Naive thymus-derived CD4-positive, alpha-beta T cell (primary cell): ENCODE measurements at regions of chr15 and their contacts with region 1.

Region 1: DNA sequence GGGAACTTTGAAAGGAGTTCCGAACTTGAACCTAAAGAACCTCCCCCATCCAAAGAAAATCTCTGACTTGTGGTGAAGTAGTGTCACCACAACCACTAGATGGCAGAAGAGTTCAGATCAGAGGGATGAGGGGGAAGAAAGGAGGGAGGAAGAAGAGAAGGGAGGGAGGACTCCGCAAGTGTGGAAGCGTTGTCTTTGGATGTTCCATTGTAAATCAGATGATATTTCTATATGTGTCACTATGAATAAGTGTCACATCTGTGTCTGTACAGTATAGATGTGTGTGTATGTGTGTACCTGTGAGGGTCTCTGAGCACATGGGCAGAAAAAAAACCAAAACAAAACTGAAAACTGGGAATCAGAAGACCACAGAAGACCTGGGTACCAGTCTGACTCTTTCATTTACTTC is 16.9 kb downstream of the SLC24A1 start:
- DNase-seq: peak in 8 of 9 donors; percentile 34 to 75 (median 68)
- ATAC-seq: peak; percentile 92
- H3K4me3 ChIP-seq: no peak overlapping the region
- H3K4me3 Mint-ChIP-seq: peak overlapping the region in 5 of 10 donors; percentile 0 to 60 (median 4)
- H3K27ac ChIP-seq: no peak overlapping the region
- H3K27ac Mint-ChIP-seq: peak overlapping the region in 3 of 9 donors; percentile 6 to 15 (median 11)
- H3K4me1 ChIP-seq: no peaks in the 10 kb centered on the region
- H3K4me1 Mint-ChIP-seq: peaks cover 7 to 19% (median 10%) of the 10 kb centered on the region in 7 donors
- H3K27me3 ChIP-seq: no peaks in the 10 kb centered on the region
- H3K27me3 Mint-ChIP-seq: no peaks in the 10 kb centered on the region

Region 2: GRCh38 chr15:65558336-65558735 is 80.3 kb before region 1 on chr15:
- CTCF ChIA-PET with region 1: interaction called, 10 read pairs
- POLR2A ChIA-PET with region 1: no interaction called
- intact Hi-C with region 1: no loop called
- DNase-seq: no peak
- ATAC-seq: no peak
- H3K4me3 ChIP-seq: no peak overlapping the region
- H3K4me3 Mint-ChIP-seq: no peak overlapping the region
- H3K27ac ChIP-seq: no peak overlapping the region
- H3K27ac Mint-ChIP-seq: no peak overlapping the region
- H3K4me1 ChIP-seq: no peaks in the 10 kb centered on the region
- H3K4me1 Mint-ChIP-seq: no peaks in the 10 kb centered on the region
- H3K27me3 ChIP-seq: no peaks in the 10 kb centered on the region
- H3K27me3 Mint-ChIP-seq: no peaks in the 10 kb centered on the region

Region 3: DNA sequence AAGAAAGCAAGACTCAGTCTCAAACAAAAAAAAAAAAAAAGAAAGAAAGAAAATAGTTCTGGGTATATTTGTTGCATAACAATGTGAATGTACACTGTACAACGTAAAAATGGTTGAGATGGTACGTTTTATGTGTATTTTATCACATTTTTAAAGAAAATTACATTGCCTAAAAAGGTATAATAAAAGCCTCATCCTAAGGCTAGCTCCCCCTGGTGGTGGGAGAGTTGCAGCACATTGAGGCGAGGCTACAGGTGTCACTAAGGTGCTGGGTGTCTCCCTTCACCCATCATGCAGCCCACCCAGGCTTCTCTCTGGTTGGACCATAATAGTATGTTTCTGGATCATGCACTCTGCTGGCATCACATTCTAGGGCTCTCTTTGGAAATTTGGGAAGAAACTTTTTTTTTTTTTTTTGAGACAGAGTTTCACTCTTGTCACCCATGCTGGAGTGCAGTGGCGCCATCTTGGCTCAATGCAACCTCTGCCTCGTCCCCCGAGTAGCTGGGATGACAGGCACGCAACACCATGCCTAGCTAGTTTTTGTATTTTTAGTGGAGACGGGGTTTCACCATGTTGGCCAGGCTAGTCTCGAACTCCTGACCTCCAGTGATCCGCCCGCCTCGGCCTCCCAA is 218.3 kb after region 1 on chr15:
- CTCF ChIA-PET with region 1: interaction called, 31 read pairs
- POLR2A ChIA-PET with region 1: no interaction called
- intact Hi-C with region 1: loop called (anchors 1 kb)
- DNase-seq: peak; percentile 54 to 83 (median 77)
- ATAC-seq: peak; percentile 94
- H3K4me3 ChIP-seq: no peak overlapping the region
- H3K4me3 Mint-ChIP-seq: no peak overlapping the region
- H3K27ac ChIP-seq: no peak overlapping the region
- H3K27ac Mint-ChIP-seq: peak overlapping the region in 2 of 9 donors; percentile 21 to 69
- H3K4me1 ChIP-seq: no peaks in the 10 kb centered on the region
- H3K4me1 Mint-ChIP-seq: peaks cover 0 to 17% (median 13%) of the 10 kb centered on the region in 7 donors
- H3K27me3 ChIP-seq: no peaks in the 10 kb centered on the region
- H3K27me3 Mint-ChIP-seq: peaks cover 0 to 15% (median 0%) of the 10 kb centered on the region in 5 donors

Region 4: GRCh38 chr15:65981837-65982626 is 343.3 kb after region 1 on chr15:
- CTCF ChIA-PET with region 1: no interaction called
- POLR2A ChIA-PET with region 1: no interaction called
- intact Hi-C with region 1: loop called in 1 of 2 experiments (anchors 1 kb)
- DNase-seq: peak; percentile 19 to 76 (median 65)
- ATAC-seq: peak; percentile 90
- H3K4me3 ChIP-seq: peak overlapping the region; percentile 53
- H3K4me3 Mint-ChIP-seq: peak overlapping the region; percentile 55 to 82 (median 71)
- H3K27ac ChIP-seq: no peak overlapping the region
- H3K27ac Mint-ChIP-seq: no peak overlapping the region
- H3K4me1 ChIP-seq: peaks cover 0 to 3% of the 10 kb centered on the region in 2 donors
- H3K4me1 Mint-ChIP-seq: peaks cover 5 to 14% (median 9%) of the 10 kb centered on the region in 7 donors
- H3K27me3 ChIP-seq: no peaks in the 10 kb centered on the region
- H3K27me3 Mint-ChIP-seq: peaks cover 16 to 53% (median 19%) of the 10 kb centered on the region in 5 donors

Region 5: DNA sequence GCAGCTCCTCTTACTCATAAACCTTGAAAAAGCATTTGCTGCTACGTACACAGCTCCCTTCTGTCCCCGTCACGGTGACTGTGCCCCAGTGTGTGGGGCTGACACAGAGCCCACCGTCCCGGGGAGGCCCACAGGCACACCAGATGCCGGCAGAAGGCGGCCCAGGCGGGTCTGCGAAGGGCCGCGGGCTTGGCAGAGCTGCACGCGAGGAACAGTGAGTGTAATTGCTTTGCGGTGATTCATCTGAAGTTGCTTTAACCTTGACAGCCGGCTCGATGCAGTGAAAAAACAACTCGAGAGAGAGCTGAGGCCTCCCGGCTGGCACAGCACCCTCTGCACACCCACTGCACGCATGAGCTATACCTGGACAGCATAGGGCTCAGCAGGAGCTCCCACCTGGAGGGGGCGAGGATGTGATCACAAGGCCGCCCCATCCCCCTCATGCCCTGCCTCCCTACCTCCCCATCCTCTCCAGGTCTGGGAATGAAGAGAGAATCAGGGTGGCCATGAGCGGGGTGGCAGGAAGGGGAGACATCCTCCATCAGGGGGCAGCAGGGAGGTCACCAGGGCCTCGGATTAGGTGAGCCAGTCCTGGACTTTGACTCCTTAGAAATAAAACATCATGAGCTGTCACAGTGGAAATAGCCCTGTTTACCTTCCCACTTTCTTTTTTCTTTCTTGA is 442.2 kb after region 1 on chr15:
- CTCF ChIA-PET with region 1: no interaction called
- POLR2A ChIA-PET with region 1: no interaction called
- intact Hi-C with region 1: loop called in 1 of 2 experiments (anchors 10 kb)
- DNase-seq: no peak
- ATAC-seq: no peak
- H3K4me3 ChIP-seq: no peak overlapping the region
- H3K4me3 Mint-ChIP-seq: no peak overlapping the region
- H3K27ac ChIP-seq: no peak overlapping the region
- H3K27ac Mint-ChIP-seq: no peak overlapping the region
- H3K4me1 ChIP-seq: no peaks in the 10 kb centered on the region
- H3K4me1 Mint-ChIP-seq: no peaks in the 10 kb centered on the region
- H3K27me3 ChIP-seq: no peaks in the 10 kb centered on the region
- H3K27me3 Mint-ChIP-seq: peaks cover 9 to 26% (median 19%) of the 10 kb centered on the region in 5 donors

Region 6: DNA sequence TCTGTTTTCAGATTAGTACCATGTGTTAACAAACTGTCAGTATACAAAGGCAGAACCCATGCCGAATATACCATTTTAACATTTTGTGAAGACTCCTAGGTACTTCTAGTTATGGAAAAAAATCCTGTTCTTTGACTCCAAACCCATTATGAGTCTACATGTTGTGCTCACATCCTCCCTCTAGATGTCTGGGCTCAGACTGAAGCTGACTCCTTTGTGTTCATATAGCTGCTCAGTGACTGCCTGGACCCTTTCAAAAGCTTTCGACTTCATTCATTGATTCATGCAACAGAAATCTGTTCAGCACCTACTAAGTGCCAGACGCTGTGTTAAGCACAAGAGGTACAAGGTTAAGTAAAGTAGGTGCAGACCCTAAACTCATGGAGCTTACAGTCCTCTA is 554.4 kb after region 1 on chr15:
- CTCF ChIA-PET with region 1: no interaction called
- POLR2A ChIA-PET with region 1: no interaction called
- intact Hi-C with region 1: loop called in 1 of 2 experiments (anchors 1 kb)
- DNase-seq: no peak
- ATAC-seq: no peak
- H3K4me3 ChIP-seq: no peak overlapping the region
- H3K4me3 Mint-ChIP-seq: no peak overlapping the region
- H3K27ac ChIP-seq: no peak overlapping the region
- H3K27ac Mint-ChIP-seq: no peak overlapping the region
- H3K4me1 ChIP-seq: no peaks in the 10 kb centered on the region
- H3K4me1 Mint-ChIP-seq: peaks cover 0 to 1% (median 0%) of the 10 kb centered on the region in 7 donors
- H3K27me3 ChIP-seq: no peaks in the 10 kb centered on the region
- H3K27me3 Mint-ChIP-seq: peaks cover 0 to 12% (median 5%) of the 10 kb centered on the region in 5 donors